ENCODE measurements at regions of chr17 and their contacts with region 1.

Region 1: GRCh38 chr17:27578718-27579085 is 52.3 kb upstream of the LGALS9 start:
- DNase-seq: peak; percentile 51 to 78 (median 56)
- ATAC-seq: no peak; the same call in 2 of the 3 replicates
- H3K4me3 ChIP-seq: no peak overlapping the region
- H3K27ac ChIP-seq: peak overlapping the region; percentile 92
- H3K4me1 ChIP-seq: peaks cover 45 to 68% of the 10 kb centered on the region in 2 experiments
- H3K27me3 ChIP-seq: no peaks in the 10 kb centered on the region
- CTCF ChIP-seq: 0 out of 6 replicates have a peak, but pooled peaks of 2 of the 3 experiments have one; percentile 26 to 32
- EP300 ChIP-seq: no peak
- POLR2A ChIP-seq: no peak
- RAD21 ChIP-seq: peak in 1 of 2 experiments; percentile 16; a peak in 1 of 4 replicates

Region 2: GRCh38 chr17:27381007-27381501 is 197.6 kb before region 1 on chr17:
- CTCF ChIA-PET with region 1: no interaction called
- POLR2A ChIA-PET with region 1: no interaction called
- in situ Hi-C with region 1: no loop called
- intact Hi-C with region 1: loop called (anchors 10 kb)
- DNase-seq: peak; percentile 93 to 95 (median 94)
- ATAC-seq: peak; percentile 94
- H3K4me3 ChIP-seq: no peak overlapping the region
- H3K27ac ChIP-seq: peak overlapping the region; percentile 39; the same call in 1 of the 3 replicates
- H3K4me1 ChIP-seq: peaks cover 26 to 30% of the 10 kb centered on the region in 2 experiments
- H3K27me3 ChIP-seq: no peaks in the 10 kb centered on the region
- CTCF ChIP-seq: peak; percentile 100
- EP300 ChIP-seq: peak; percentile 69
- POLR2A ChIP-seq: no peak
- RAD21 ChIP-seq: peak; percentile 92 to 98

Region 3: DNA sequence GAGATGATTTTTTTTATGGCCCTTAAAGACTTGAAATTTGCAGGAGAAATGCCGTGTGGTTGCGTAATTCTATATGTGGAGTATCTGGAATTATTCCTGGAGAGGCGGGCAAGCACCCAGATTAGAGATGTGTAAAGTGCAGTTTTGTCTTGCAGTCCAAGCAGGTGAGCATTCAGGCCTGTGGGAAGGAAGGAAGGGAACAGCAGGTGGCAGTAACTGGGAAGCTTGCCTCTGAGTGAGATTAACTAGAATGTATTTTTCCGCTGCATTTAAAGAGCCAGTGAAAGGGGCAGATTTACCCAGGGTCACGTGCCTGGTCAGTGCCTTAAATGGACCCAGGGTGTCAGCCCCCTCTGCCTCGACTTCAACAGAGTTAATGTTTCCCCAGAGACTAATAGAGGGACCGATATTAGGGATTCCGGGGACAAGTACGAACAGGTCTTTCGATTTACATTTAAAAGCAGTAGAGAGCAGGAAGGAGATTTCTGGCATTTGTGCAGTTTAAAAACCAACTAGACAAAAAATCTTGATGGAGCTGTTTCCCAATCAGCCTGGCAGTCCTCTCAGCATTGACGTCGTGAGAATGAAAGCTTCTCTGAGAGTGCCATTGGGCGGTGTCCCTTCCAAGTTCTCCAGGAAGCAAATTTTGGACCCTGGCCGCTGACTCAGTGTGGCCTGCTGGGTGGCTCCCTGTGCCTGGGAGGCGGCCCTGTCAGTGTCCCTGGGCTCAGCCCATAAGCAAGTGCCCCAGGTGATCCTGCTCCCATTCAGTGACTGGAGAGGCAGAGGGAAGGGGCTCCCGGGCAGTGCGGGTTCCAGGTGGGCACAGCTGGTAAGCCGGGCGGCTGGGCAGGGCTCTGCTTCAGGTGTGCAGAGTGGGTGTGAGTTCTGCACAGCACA is 84.3 kb before region 1 on chr17:
- CTCF ChIA-PET with region 1: no interaction called
- POLR2A ChIA-PET with region 1: interaction called, 4 read pairs
- in situ Hi-C with region 1: no loop called
- intact Hi-C with region 1: loop called (anchors 10 kb)
- DNase-seq: no peak
- ATAC-seq: no peak
- H3K4me3 ChIP-seq: no peak overlapping the region
- H3K27ac ChIP-seq: no peak overlapping the region
- H3K4me1 ChIP-seq: peaks cover 35 to 61% of the 10 kb centered on the region in 2 experiments
- H3K27me3 ChIP-seq: no peaks in the 10 kb centered on the region
- CTCF ChIP-seq: peak; percentile 24 to 43 (median 40); a peak in 2 of 6 replicates
- EP300 ChIP-seq: no peak
- POLR2A ChIP-seq: no peak
- RAD21 ChIP-seq: peak in 1 of 2 experiments; percentile 50; a peak in 2 of 4 replicates